Motor neuron (in vitro differentiated cells): ENCODE measurements at regions of chr10 and their contacts with region 1.

Region 1: GRCh38 chr10:30403494-30403893 is 30.5 kb upstream of the MAP3K8 start:
- ATAC-seq: no peak
- H3K4me3 ChIP-seq: no peak overlapping the region
- H3K27ac ChIP-seq: no peak overlapping the region
- H3K4me1 ChIP-seq: no peaks in the 10 kb centered on the region

Region 2: GRCh38 chr10:29841724-29842649 is 561.5 kb before region 1 on chr10:
- in situ Hi-C with region 1: no loop called
- ATAC-seq: peak; percentile 69 to 97 (median 82)
- H3K4me3 ChIP-seq: no peak overlapping the region
- H3K27ac ChIP-seq: peak overlapping the region in 1 of 2 donors; percentile 16
- H3K4me1 ChIP-seq: peaks cover 4 to 24% of the 10 kb centered on the region in 2 donors

Region 3: GRCh38 chr10:30583778-30584415 is 180.4 kb after region 1 on chr10:
- in situ Hi-C with region 1: loop called in 6 of 9 experiments (anchors 10 to 25 kb)
- ATAC-seq: peak in 7 of 8 experiments; percentile 42 to 94 (median 74)
- H3K4me3 ChIP-seq: no peak overlapping the region
- H3K27ac ChIP-seq: no peak overlapping the region
- H3K4me1 ChIP-seq: peaks cover 13 to 14% of the 10 kb centered on the region in 2 donors

Region 4: DNA sequence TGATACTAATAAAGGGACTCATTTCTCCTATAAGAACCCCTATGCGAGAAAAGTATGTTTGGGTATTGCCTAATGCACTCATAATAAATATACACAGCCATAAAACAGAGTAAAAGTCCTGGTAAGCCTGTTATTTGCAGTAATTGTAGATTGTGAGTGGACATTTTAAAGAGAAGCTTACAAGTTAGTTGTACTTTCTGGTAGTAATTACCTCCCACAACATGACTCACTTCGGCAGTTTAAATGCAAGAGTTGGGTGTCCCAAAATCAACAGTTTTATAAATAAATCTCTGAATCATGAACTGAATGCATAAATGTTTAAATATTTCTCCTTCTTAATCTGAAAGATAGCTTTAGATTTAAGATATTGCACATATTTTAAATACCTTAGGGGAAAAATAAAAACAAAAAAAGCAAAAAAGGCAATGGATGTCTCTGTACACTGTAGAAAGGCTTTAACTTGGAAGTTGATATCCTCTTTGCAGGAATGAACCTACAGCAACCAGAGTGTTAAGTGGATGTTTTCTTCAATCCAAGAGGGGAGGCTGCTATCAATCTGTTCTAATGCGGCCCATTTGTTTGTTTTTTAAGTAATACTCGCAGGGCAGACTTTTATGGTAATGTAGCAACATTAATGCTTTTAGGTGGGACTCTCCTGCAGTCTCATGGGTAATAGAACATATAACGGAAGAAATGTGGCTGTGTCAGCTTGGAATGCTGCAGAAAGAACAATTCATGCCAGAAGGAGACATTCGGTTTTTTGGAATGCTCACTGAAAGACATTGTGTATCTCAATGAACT is 858.2 kb after region 1 on chr10:
- in situ Hi-C with region 1: no loop called
- ATAC-seq: peak in 3 of 8 experiments; percentile 69 to 89 (median 83)
- H3K4me3 ChIP-seq: no peak overlapping the region
- H3K27ac ChIP-seq: no peak overlapping the region
- H3K4me1 ChIP-seq: no peaks in the 10 kb centered on the region